ENCODE measurements at regions of chr19 and their contacts with region 1.

Region 1: GRCh38 chr19:5547881-5548280 is 19.9 kb downstream of the TINCR start:
- DNase-seq: peak; percentile 46
- H3K4me3 ChIP-seq: no peak overlapping the region
- H3K27ac ChIP-seq: no peak overlapping the region
- H3K4me1 ChIP-seq: no peaks in the 10 kb centered on the region
- H3K27me3 ChIP-seq: no peaks in the 10 kb centered on the region
- CTCF ChIP-seq: peak; percentile 81 to 87

Region 2: GRCh38 chr19:5503598-5503997 is 44.3 kb before region 1 on chr19:
- CTCF ChIA-PET with region 1: no interaction called
- dilution Hi-C with region 1: loop called (anchors 5 kb)
- in situ Hi-C with region 1: no loop called
- intact Hi-C with region 1: no loop called
- DNase-seq: no peak
- H3K4me3 ChIP-seq: no peak overlapping the region
- H3K27ac ChIP-seq: no peak overlapping the region
- H3K4me1 ChIP-seq: no peaks in the 10 kb centered on the region
- H3K27me3 ChIP-seq: no peaks in the 10 kb centered on the region
- CTCF ChIP-seq: peak in 1 of 2 donors; percentile 34

Region 3: GRCh38 chr19:5577785-5578493 is 30.1 kb after region 1 on chr19:
- CTCF ChIA-PET with region 1: interaction called, 5 read pairs
- dilution Hi-C with region 1: loop called (anchors 5 kb)
- in situ Hi-C with region 1: no loop called
- intact Hi-C with region 1: loop called (anchors 1 kb)
- DNase-seq: peak; percentile 67
- H3K4me3 ChIP-seq: peak overlapping the region in 1 of 3 experiments; percentile 42
- H3K27ac ChIP-seq: no peak overlapping the region
- H3K4me1 ChIP-seq: peaks cover 8% of the 10 kb centered on the region
- H3K27me3 ChIP-seq: no peaks in the 10 kb centered on the region
- CTCF ChIP-seq: peak; percentile 85 to 99

Region 4: DNA sequence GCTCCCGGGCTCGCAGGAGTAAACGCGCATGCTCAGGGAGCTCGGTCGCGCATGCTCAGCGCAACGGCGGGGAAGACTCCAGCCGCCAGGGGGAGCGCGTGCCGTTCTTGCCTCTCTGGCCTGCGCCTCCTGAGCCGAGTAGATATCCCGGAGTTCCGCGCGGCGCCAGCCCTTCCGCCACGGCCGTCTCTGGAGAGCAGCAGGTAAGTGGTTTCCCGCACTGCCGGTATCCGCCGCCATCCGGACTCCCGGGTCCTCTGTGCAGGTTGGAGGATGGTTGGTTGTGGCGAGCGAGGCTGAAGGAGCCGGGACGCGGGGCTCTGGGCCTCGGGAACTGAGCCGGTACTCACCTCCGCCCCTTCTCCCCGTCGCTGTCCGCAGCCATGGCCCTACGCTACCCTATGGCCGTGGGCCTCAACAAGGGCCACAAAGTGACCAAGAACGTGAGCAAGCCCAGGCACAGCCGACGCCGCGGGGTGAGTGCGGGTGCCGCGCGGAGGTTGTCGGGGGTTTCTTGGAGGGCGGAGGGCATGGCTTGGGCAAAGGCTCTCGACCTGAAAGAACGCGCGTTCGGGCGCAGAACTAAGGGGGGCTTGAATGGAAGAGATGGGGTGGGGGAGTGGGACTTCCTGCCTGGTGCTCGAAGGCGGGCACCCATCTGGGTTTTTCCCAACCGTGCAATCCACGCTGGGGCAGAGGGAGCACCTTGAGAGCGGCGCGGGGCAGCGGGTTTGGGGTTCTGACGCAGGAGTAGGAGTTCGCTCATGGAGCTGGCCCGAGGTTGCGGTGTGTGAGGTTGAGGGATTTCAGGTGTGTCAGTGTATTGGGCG is 142.5 kb after region 1 on chr19 and contains the start of gene RPL36:
- CTCF ChIA-PET with region 1: no interaction called
- dilution Hi-C with region 1: no loop called
- in situ Hi-C with region 1: no loop called
- intact Hi-C with region 1: loop called (anchors 5 kb)
- DNase-seq: peak; percentile 95
- H3K4me3 ChIP-seq: peak within 1 kb of the TSS; percentile 65 to 97 (median 81)
- H3K27ac ChIP-seq: peak within 1 kb of the TSS; percentile 77
- H3K4me1 ChIP-seq: peaks cover 26% of the 10 kb centered on the region
- H3K27me3 ChIP-seq: no peaks in the 10 kb centered on the region
- CTCF ChIP-seq: peak; percentile 95 to 97
- total RNA-seq, gene RPL36: 323 to 990 TPM

Measured in mammary epithelial cell (primary cell).